Activated CD8-positive, alpha-beta T cell treated with anti-CD3 and anti-CD28 coated beads for 36 hours (primary cell): ENCODE measurements at regions of chr7 and their contacts with region 1.

Region 1: GRCh38 chr7:7681179-7681935 is 37.0 kb downstream of the RPA3 start:
- DNase-seq: peak; percentile 65
- ATAC-seq: peak; percentile 87
- H3K4me3 Mint-ChIP-seq: no peak overlapping the region
- H3K27ac Mint-ChIP-seq: no peak overlapping the region
- H3K4me1 Mint-ChIP-seq: peaks cover 33% of the 10 kb centered on the region
- H3K27me3 Mint-ChIP-seq: no peaks in the 10 kb centered on the region
- CTCF ChIP-seq: peak; percentile 82

Region 2: DNA sequence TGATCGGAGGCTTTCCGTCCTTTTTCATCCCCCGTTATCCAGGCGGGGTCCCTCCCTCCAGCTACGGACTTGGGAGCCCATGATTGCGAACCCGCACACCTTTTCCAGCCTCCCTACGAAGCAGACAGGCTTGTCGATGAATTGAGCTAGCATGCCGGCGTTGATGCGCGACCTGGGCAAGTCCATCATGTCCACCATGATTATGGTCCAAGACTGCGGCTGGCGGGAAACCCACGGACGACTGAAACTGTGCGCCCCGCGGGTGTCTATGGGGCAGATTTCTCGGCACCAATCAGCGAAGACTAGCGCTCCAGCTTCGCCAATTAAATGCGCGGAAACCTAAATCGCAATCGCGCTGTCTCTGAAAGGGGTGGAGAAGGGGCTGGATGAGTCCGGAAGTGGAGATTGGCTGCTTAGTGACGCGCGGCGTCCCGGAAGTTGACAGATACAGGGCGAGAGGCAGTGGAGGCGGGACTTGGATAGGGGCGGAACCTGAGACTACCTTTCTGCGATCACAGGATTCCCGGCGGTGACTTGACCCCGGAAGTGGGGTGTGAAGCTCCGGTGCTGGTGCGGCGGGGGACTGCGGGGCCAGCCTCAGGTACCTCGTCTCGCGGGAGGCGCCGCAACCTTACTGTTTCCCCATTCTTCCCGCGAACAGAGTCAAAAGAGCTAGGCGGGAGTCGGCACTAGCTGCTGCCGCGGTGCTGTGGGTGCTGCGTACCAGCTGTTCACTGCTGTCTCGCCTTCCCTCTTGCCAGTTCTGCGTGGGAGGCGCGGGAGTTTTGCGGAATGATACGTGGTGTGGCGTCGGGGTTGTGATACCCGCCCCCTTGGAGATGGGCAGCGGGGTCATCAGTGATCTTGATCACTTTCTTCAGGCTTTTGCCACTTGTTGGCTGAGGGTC is 40.9 kb before region 1 on chr7 and contains the start of gene UMAD1:
- CTCF ChIA-PET with region 1: interaction called, 12 read pairs
- POLR2A ChIA-PET with region 1: interaction called, 4 read pairs
- intact Hi-C with region 1: no loop called
- DNase-seq: peak; percentile 99
- ATAC-seq: peak; percentile 95
- H3K4me3 Mint-ChIP-seq: peak within 1 kb of the TSS; percentile 89
- H3K27ac Mint-ChIP-seq: peak within 1 kb of the TSS; percentile 99
- H3K4me1 Mint-ChIP-seq: peaks cover 37% of the 10 kb centered on the region
- H3K27me3 Mint-ChIP-seq: no peaks in the 10 kb centered on the region
- CTCF ChIP-seq: no peak
- total RNA-seq, gene UMAD1: 10.1 to 11.1 TPM

Region 3: GRCh38 chr7:7696458-7697119 is 15.2 kb after region 1 on chr7:
- CTCF ChIA-PET with region 1: interaction called, 34 read pairs
- POLR2A ChIA-PET with region 1: interaction called, 3 read pairs
- intact Hi-C with region 1: no loop called
- DNase-seq: no peak
- ATAC-seq: no peak
- H3K4me3 Mint-ChIP-seq: no peak overlapping the region
- H3K27ac Mint-ChIP-seq: no peak overlapping the region
- H3K4me1 Mint-ChIP-seq: peaks cover 29% of the 10 kb centered on the region
- H3K27me3 Mint-ChIP-seq: no peaks in the 10 kb centered on the region
- CTCF ChIP-seq: no peak

Region 4: GRCh38 chr7:7761340-7761980 is 80.1 kb after region 1 on chr7:
- CTCF ChIA-PET with region 1: interaction called, 63 read pairs
- POLR2A ChIA-PET with region 1: no interaction called
- intact Hi-C with region 1: loop called (anchors 1 kb)
- DNase-seq: no peak
- ATAC-seq: peak; percentile 34
- H3K4me3 Mint-ChIP-seq: peak overlapping the region; percentile 89
- H3K27ac Mint-ChIP-seq: peak overlapping the region; percentile 92
- H3K4me1 Mint-ChIP-seq: peaks cover 38% of the 10 kb centered on the region
- H3K27me3 Mint-ChIP-seq: no peaks in the 10 kb centered on the region
- CTCF ChIP-seq: peak; percentile 58

Region 5: GRCh38 chr7:7808156-7808555 is 126.8 kb after region 1 on chr7:
- CTCF ChIA-PET with region 1: no interaction called
- POLR2A ChIA-PET with region 1: no interaction called
- intact Hi-C with region 1: no loop called
- DNase-seq: no peak
- ATAC-seq: no peak
- H3K4me3 Mint-ChIP-seq: no peak overlapping the region
- H3K27ac Mint-ChIP-seq: no peak overlapping the region
- H3K4me1 Mint-ChIP-seq: no peaks in the 10 kb centered on the region
- H3K27me3 Mint-ChIP-seq: no peaks in the 10 kb centered on the region
- CTCF ChIP-seq: no peak

Region 6: GRCh38 chr7:8035647-8036518 is 354.5 kb after region 1 on chr7:
- CTCF ChIA-PET with region 1: interaction called, 19 read pairs
- POLR2A ChIA-PET with region 1: no interaction called
- intact Hi-C with region 1: no loop called
- DNase-seq: no peak
- ATAC-seq: peak; percentile 86
- H3K4me3 Mint-ChIP-seq: no peak overlapping the region
- H3K27ac Mint-ChIP-seq: peak overlapping the region; percentile 27
- H3K4me1 Mint-ChIP-seq: peaks cover 20% of the 10 kb centered on the region
- H3K27me3 Mint-ChIP-seq: no peaks in the 10 kb centered on the region
- CTCF ChIP-seq: peak; percentile 18

Region 7: GRCh38 chr7:8176370-8177081 is 495.2 kb after region 1 on chr7:
- CTCF ChIA-PET with region 1: no interaction called
- POLR2A ChIA-PET with region 1: no interaction called
- intact Hi-C with region 1: no loop called
- DNase-seq: peak; percentile 81
- ATAC-seq: peak; percentile 88
- H3K4me3 Mint-ChIP-seq: peak overlapping the region; percentile 65
- H3K27ac Mint-ChIP-seq: peak overlapping the region; percentile 95
- H3K4me1 Mint-ChIP-seq: peaks cover 55% of the 10 kb centered on the region
- H3K27me3 Mint-ChIP-seq: no peaks in the 10 kb centered on the region
- CTCF ChIP-seq: no peak

Region 8: GRCh38 chr7:8190119-8190895 is 508.9 kb after region 1 on chr7:
- CTCF ChIA-PET with region 1: interaction called, 35 read pairs
- POLR2A ChIA-PET with region 1: no interaction called
- intact Hi-C with region 1: loop called (anchors 10 kb)
- DNase-seq: peak; percentile 83
- ATAC-seq: peak; percentile 71
- H3K4me3 Mint-ChIP-seq: no peak overlapping the region
- H3K27ac Mint-ChIP-seq: no peak overlapping the region
- H3K4me1 Mint-ChIP-seq: peaks cover 17% of the 10 kb centered on the region
- H3K27me3 Mint-ChIP-seq: no peaks in the 10 kb centered on the region
- CTCF ChIP-seq: peak; percentile 79